OCI-LY7 (cell line): ENCODE measurements at regions of chr1 and their contacts with region 1.

Region 1: GRCh38 chr1:71049951-71050598 is 2.5 kb upstream of the PTGER3 start:
- DNase-seq: peak; percentile 68
- H3K4me3 ChIP-seq: no peak overlapping the region
- H3K27ac ChIP-seq: no peak overlapping the region
- H3K4me1 ChIP-seq: no peaks in the 10 kb centered on the region
- CTCF ChIP-seq: peak; percentile 91

Region 2: GRCh38 chr1:70528590-70529333 is 521.3 kb before region 1 on chr1:
- CTCF ChIA-PET with region 1: no interaction called
- POLR2A ChIA-PET with region 1: no interaction called
- intact Hi-C with region 1: loop called (anchors 2 kb)
- DNase-seq: peak; percentile 26
- H3K4me3 ChIP-seq: no peak overlapping the region
- H3K27ac ChIP-seq: no peak overlapping the region
- H3K4me1 ChIP-seq: no peaks in the 10 kb centered on the region
- CTCF ChIP-seq: peak; percentile 69

Region 3: GRCh38 chr1:70685300-70686241 is 364.5 kb before region 1 on chr1:
- CTCF ChIA-PET with region 1: no interaction called
- POLR2A ChIA-PET with region 1: no interaction called
- intact Hi-C with region 1: loop called (anchors 1 kb)
- DNase-seq: peak; percentile 59
- H3K4me3 ChIP-seq: no peak overlapping the region
- H3K27ac ChIP-seq: no peak overlapping the region
- H3K4me1 ChIP-seq: no peaks in the 10 kb centered on the region
- CTCF ChIP-seq: peak; percentile 87

Region 4: GRCh38 chr1:70745199-70745598 is 304.9 kb before region 1 on chr1:
- CTCF ChIA-PET with region 1: no interaction called
- POLR2A ChIA-PET with region 1: no interaction called
- intact Hi-C with region 1: loop called (anchors 2 kb)
- DNase-seq: peak; percentile 9
- H3K4me3 ChIP-seq: no peak overlapping the region
- H3K27ac ChIP-seq: no peak overlapping the region
- H3K4me1 ChIP-seq: no peaks in the 10 kb centered on the region
- CTCF ChIP-seq: peak; percentile 66

Region 5: DNA sequence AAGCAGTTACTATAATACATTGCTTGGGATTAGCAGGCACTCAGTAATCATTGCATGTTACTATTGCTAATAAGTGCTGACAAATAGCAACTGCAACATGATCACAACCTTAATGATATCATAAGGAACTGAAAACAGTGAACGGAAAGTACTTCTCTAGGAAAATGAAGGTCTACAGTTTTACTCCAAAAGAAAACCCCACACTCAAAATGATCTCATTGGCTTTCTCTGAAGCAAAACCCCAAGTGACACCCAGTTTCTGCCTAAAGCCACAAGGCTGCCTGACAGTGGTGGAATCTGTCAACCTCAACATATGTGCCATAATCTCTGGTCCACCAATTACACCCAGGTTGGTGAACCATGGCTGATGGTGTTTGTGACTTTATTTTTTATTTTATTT is 140.1 kb before region 1 on chr1:
- CTCF ChIA-PET with region 1: no interaction called
- POLR2A ChIA-PET with region 1: no interaction called
- intact Hi-C with region 1: no loop called
- DNase-seq: no peak
- H3K4me3 ChIP-seq: no peak overlapping the region
- H3K27ac ChIP-seq: no peak overlapping the region
- H3K4me1 ChIP-seq: no peaks in the 10 kb centered on the region
- CTCF ChIP-seq: no peak

Region 6: DNA sequence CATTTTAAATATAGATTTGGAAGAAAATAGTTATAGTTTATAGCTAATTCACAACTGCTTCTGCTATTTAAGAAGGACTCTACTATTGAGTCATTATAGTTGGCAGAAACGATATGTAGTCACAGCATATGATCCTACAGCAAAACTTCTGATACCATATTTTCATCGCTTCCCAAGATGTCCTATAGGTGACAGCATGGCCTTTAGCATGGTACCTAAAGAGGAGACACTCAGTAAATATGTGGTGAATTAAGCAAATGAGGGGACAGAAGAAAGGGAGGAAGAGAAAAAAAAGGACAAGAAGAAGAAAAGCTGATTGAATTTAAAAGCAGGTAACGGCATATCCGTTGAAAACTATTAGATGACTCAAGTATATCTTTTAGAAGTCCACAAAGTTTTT is 79.7 kb before region 1 on chr1:
- CTCF ChIA-PET with region 1: no interaction called
- POLR2A ChIA-PET with region 1: no interaction called
- intact Hi-C with region 1: loop called (anchors 2 kb)
- DNase-seq: peak; percentile 14
- H3K4me3 ChIP-seq: no peak overlapping the region
- H3K27ac ChIP-seq: no peak overlapping the region
- H3K4me1 ChIP-seq: no peaks in the 10 kb centered on the region
- CTCF ChIP-seq: peak; percentile 45

Region 7: GRCh38 chr1:71004966-71005365 is 45.1 kb before region 1 on chr1:
- CTCF ChIA-PET with region 1: no interaction called
- POLR2A ChIA-PET with region 1: no interaction called
- intact Hi-C with region 1: no loop called
- DNase-seq: no peak
- H3K4me3 ChIP-seq: no peak overlapping the region
- H3K27ac ChIP-seq: no peak overlapping the region
- H3K4me1 ChIP-seq: no peaks in the 10 kb centered on the region
- CTCF ChIP-seq: no peak